ENCODE measurements at regions of chr14 and their contacts with region 1.

Region 1: DNA sequence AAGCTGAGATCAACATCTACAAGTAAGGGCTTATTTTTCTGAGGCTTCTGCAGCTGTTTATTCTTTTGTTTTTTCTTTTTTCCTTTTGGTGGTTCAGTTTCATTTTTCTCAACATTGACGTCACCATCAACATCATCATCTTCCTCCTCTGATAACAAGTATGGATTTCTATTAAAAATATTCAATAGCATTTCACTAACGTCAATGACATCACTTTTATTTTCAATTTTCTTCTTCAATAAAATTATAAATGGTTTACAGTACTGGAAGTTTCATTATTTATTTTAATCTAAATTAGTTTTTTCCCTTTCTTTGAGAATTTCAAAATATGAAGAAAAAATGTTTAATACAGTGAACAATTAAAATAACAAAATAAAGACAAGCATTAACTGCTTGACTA is 23.9 kb downstream of the NEMF start:
- DNase-seq: no peak
- H3K4me3 ChIP-seq: no peak overlapping the region
- H3K27ac ChIP-seq: no peak overlapping the region
- H3K4me1 ChIP-seq: no peaks in the 10 kb centered on the region
- H3K27me3 ChIP-seq: no peaks in the 10 kb centered on the region
- CTCF ChIP-seq: no peak
- POLR2A ChIP-seq: no peak

Region 2: DNA sequence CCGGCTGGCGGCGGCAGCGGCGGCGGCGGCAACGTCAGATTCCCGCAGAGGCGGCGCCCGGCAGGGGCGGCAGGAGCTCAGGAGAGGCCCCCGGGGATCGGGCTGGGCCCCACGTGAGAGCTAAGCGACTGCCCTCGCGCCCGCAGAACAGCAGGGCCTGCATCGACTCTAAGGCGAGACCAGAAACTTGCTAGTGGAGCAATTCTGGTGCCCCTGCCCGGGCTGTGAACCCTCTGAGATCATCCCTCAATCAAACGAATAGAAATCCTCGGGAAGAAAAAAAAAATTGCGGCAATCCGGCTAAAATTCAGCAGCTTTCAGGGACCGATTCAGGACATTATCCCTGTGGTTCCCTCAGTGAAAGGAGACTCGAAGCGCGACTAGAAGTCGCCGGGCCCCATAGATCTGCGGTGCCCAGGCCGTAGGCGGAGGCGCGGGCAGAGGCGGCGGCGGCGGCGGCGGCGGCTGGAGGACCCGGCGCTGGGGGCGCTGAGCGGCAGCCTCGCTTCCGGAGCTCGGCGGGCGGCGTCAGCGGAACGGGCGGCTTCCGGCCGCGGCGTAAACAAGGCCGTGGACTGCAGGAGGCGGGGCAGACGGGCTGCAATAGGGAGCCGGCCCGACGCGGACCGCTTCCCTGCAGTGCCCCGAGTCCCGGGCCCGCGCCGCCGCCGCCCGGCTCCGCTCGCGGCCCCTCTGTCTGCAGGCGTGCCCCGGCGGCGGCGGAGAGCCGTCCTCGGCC is 60.9 kb before region 1 on chr14 and contains the start of gene KLHDC2:
- intact Hi-C with region 1: no loop called
- DNase-seq: peak; percentile 88 to 93 (median 91)
- H3K4me3 ChIP-seq: peak within 1 kb of the TSS; percentile 33 to 100 (median 86)
- H3K27ac ChIP-seq: peak within 1 kb of the TSS; percentile 87 to 99 (median 98)
- H3K4me1 ChIP-seq: peaks cover 26 to 34% of the 10 kb centered on the region in 2 donors
- H3K27me3 ChIP-seq: no peaks in the 10 kb centered on the region
- CTCF ChIP-seq: peak in 3 of 6 experiments; percentile 25 to 33 (median 31)
- POLR2A ChIP-seq: peak; percentile 92 to 97
- total RNA-seq, gene KLHDC2: 54.3 to 134 (median 68.8) TPM

Region 3: GRCh38 chr14:49778421-49778820 is 50.2 kb before region 1 on chr14:
- intact Hi-C with region 1: loop called (anchors 5 to 10 kb)
- DNase-seq: no peak
- H3K4me3 ChIP-seq: no peak overlapping the region
- H3K27ac ChIP-seq: no peak overlapping the region
- H3K4me1 ChIP-seq: peaks cover 0 to 4% of the 10 kb centered on the region in 2 donors
- H3K27me3 ChIP-seq: no peaks in the 10 kb centered on the region
- CTCF ChIP-seq: no peak
- POLR2A ChIP-seq: no peak

Region 4: DNA sequence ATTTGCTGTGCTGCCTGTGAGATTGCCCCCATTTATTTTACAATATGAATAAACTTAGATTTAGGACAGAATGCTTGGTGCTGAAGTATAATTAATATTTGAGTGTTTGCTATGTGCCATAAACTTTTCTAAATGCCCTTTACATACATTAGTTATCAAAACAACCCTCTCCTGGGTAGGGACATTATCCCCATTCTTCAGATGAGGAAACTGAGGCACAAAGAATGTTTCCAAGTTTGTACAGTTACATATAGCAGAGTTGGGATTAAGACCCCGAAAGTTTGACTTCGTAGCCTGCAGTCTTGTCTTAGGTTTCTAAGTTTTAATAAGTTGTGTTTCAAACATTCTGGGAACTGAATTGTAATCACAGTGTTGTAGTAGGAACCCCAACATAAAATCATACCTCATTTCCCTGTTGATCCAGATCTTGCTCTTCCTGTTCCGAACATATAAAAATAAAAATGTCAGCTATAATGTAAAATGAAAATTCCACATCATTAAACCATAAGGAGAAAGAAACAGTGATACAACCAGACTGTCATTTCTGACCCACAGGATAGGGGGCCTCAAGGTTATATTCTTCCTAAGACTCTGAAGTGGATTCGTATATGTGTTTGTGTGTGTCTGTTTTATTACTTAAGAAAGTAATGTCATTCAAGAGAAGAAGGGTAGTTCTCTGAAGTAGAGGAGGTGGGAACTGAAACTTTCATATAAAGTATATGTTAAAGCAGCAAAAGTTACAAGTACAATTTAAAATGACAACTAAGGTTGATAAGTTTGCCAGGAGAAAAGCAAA is 42.1 kb before region 1 on chr14:
- intact Hi-C with region 1: loop called in 1 of 2 experiments (anchors 10 kb)
- DNase-seq: no peak
- H3K4me3 ChIP-seq: no peak overlapping the region
- H3K27ac ChIP-seq: no peak overlapping the region
- H3K4me1 ChIP-seq: no peaks in the 10 kb centered on the region
- H3K27me3 ChIP-seq: no peaks in the 10 kb centered on the region
- CTCF ChIP-seq: no peak
- POLR2A ChIP-seq: no peak

Measured in adrenal gland (tissue), 19 donors.